ENCODE measurements at regions of chr19 and their contacts with region 1.

Region 1: GRCh38 chr19:38335949-38336637 is 463 bp downstream of the CATSPERG start:
- DNase-seq: peak; percentile 96
- ATAC-seq: peak; percentile 64
- H3K4me3 ChIP-seq: peak overlapping the region; percentile 52 to 85 (median 80)
- H3K4me3 Mint-ChIP-seq: peak overlapping the region; percentile 97
- H3K27ac ChIP-seq: peak overlapping the region; percentile 89 to 95
- H3K27ac Mint-ChIP-seq: peak overlapping the region; percentile 97
- H3K4me1 ChIP-seq: peaks cover 5 to 11% of the 10 kb centered on the region in 2 donors
- H3K4me1 Mint-ChIP-seq: peaks cover 13% of the 10 kb centered on the region
- H3K27me3 ChIP-seq: no peaks in the 10 kb centered on the region
- H3K27me3 Mint-ChIP-seq: no peaks in the 10 kb centered on the region
- CTCF ChIP-seq: no peak

Region 2: GRCh38 chr19:37077934-37078725 is 1258.0 kb before region 1 on chr19 and contains the start of gene ZNF420:
- CTCF ChIA-PET with region 1: no interaction called
- POLR2A ChIA-PET with region 1: interaction called, 3 read pairs
- intact Hi-C with region 1: loop called (anchors 5 kb)
- DNase-seq: peak; percentile 96
- ATAC-seq: peak; percentile 95
- H3K4me3 ChIP-seq: peak within 1 kb of the TSS; percentile 76 to 93 (median 85)
- H3K4me3 Mint-ChIP-seq: peak within 1 kb of the TSS; percentile 93
- H3K27ac ChIP-seq: peak within 1 kb of the TSS; percentile 71 to 89
- H3K27ac Mint-ChIP-seq: peak within 1 kb of the TSS; percentile 96
- H3K4me1 ChIP-seq: peaks cover 14 to 20% of the 10 kb centered on the region in 2 donors
- H3K4me1 Mint-ChIP-seq: peaks cover 29% of the 10 kb centered on the region
- H3K27me3 ChIP-seq: no peaks in the 10 kb centered on the region
- H3K27me3 Mint-ChIP-seq: no peaks in the 10 kb centered on the region
- CTCF ChIP-seq: no peak
- total RNA-seq, gene ZNF420: 17.4 and 24.9 TPM in 2 replicates

Region 3: DNA sequence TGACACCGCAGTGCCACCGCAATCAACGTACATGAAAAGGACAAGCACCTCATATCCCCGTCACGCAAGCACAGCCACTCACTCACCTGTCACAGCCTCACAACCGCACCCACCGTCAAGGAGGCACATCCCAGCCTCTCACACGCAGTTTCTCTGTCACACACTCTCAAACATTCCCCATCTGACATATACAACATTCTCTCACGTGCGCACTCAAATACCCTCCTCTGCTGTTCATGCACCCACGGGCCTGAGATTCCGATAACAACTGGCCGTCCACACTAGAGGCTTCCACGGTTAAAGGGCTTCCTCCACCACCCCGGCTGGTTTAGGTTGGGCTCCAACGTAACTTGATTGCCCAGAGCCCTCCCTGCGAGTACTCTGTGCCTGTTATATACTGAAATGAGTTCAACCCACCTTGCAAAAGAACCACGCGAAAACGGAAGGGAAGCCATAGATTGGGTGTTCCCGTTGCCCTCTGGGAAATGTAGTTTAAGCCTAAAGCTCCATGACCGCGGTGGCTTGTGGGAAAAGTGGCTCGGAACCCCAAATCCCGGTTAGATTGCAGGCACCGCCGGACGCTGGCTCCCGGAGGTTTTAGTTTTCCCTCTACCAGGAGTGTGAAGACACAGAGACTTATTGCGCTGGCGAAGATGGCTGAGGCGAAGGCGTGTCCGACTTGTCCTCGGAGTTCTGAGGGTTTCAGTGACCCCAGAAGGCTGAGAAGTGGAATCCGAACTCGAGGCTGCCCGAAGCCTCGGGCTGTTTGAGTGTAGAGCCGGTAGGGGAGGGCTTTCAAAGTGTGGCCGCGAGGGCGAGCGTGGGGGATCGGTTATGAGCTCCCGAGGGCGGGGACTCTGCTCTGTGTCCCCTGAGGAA is 556.7 kb before region 1 on chr19 and contains the start of gene ZNF573:
- CTCF ChIA-PET with region 1: no interaction called
- POLR2A ChIA-PET with region 1: no interaction called
- intact Hi-C with region 1: loop called (anchors 5 kb)
- DNase-seq: peak; percentile 91
- ATAC-seq: peak; percentile 84
- H3K4me3 ChIP-seq: peak within 1 kb of the TSS; percentile 71 to 81 (median 74)
- H3K4me3 Mint-ChIP-seq: peak within 1 kb of the TSS; percentile 96
- H3K27ac ChIP-seq: peak within 1 kb of the TSS; percentile 86 to 93
- H3K27ac Mint-ChIP-seq: peak within 1 kb of the TSS; percentile 97
- H3K4me1 ChIP-seq: peaks cover 7 to 11% of the 10 kb centered on the region in 2 donors
- H3K4me1 Mint-ChIP-seq: peaks cover 39% of the 10 kb centered on the region
- H3K27me3 ChIP-seq: no peaks in the 10 kb centered on the region
- H3K27me3 Mint-ChIP-seq: no peaks in the 10 kb centered on the region
- CTCF ChIP-seq: peak; percentile 18
- total RNA-seq, gene ZNF573: 28.8 and 31.1 TPM in 2 replicates

Region 4: DNA sequence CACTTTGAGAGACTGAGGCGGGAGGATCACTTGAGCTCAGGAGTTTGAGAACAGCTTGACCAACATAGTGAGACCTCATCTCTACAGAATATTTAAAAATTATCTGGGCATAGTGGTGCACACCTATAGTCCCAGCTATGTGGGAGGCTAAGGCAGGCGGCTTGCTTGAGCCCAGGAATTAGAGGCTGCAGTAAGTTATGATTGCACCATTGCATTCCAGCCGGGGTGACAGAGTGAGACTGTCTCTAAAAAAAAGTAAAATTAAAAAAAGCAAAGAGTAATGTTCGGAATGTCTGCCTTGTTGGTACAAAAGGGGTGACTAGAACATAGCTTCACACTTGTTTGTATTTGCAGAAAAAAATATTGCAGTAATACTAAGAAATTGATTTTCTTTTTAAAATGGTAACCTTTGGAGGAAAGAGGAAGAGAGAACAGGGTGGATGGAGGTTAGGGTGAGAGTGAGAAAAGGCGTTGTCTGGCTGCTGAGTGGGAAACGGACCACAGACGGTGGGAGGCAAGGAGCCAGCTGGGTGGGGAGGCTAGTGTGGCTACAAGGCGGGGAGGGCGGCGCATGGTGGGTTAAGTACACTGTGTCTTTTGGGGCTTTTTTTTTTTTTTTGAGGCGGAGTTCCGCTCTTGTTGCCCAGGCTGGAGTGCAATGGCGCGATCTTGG is 90.1 kb before region 1 on chr19:
- CTCF ChIA-PET with region 1: interaction called, 55 read pairs
- POLR2A ChIA-PET with region 1: no interaction called
- intact Hi-C with region 1: loop called (anchors 1 kb)
- DNase-seq: no peak
- ATAC-seq: no peak
- H3K4me3 ChIP-seq: no peak overlapping the region
- H3K4me3 Mint-ChIP-seq: no peak overlapping the region
- H3K27ac ChIP-seq: no peak overlapping the region
- H3K27ac Mint-ChIP-seq: no peak overlapping the region
- H3K4me1 ChIP-seq: peaks cover 3 to 12% of the 10 kb centered on the region in 2 donors
- H3K4me1 Mint-ChIP-seq: peaks cover 15% of the 10 kb centered on the region
- H3K27me3 ChIP-seq: no peaks in the 10 kb centered on the region
- H3K27me3 Mint-ChIP-seq: no peaks in the 10 kb centered on the region
- CTCF ChIP-seq: no peak

Region 5: GRCh38 chr19:38361633-38362075 is 25.6 kb after region 1 on chr19:
- CTCF ChIA-PET with region 1: no interaction called
- POLR2A ChIA-PET with region 1: no interaction called
- intact Hi-C with region 1: loop called (anchors 1 kb)
- DNase-seq: peak; percentile 77
- ATAC-seq: peak; percentile 68
- H3K4me3 ChIP-seq: peak overlapping the region; percentile 14 to 76 (median 62)
- H3K4me3 Mint-ChIP-seq: peak overlapping the region; percentile 91
- H3K27ac ChIP-seq: no peak overlapping the region
- H3K27ac Mint-ChIP-seq: peak overlapping the region; percentile 53
- H3K4me1 ChIP-seq: peaks cover 9 to 20% of the 10 kb centered on the region in 2 donors
- H3K4me1 Mint-ChIP-seq: peaks cover 17% of the 10 kb centered on the region
- H3K27me3 ChIP-seq: peaks cover 0 to 27% (median 2%) of the 10 kb centered on the region in 4 experiments
- H3K27me3 Mint-ChIP-seq: peaks cover 6% of the 10 kb centered on the region
- CTCF ChIP-seq: peak; percentile 16

Region 6: GRCh38 chr19:38402967-38403861 is 67.1 kb after region 1 on chr19 and contains the start of gene FAM98C:
- CTCF ChIA-PET with region 1: interaction called, 4 read pairs
- POLR2A ChIA-PET with region 1: no interaction called
- intact Hi-C with region 1: loop called (anchors 1 kb)
- DNase-seq: peak; percentile 99
- ATAC-seq: peak; percentile 97
- H3K4me3 ChIP-seq: peak within 1 kb of the TSS; percentile 41 to 85 (median 75)
- H3K4me3 Mint-ChIP-seq: peak within 1 kb of the TSS; percentile 94
- H3K27ac ChIP-seq: peak within 1 kb of the TSS; percentile 61 to 79
- H3K27ac Mint-ChIP-seq: peak within 1 kb of the TSS; percentile 94
- H3K4me1 ChIP-seq: peaks cover 5 to 14% of the 10 kb centered on the region in 2 donors
- H3K4me1 Mint-ChIP-seq: peaks cover 18% of the 10 kb centered on the region
- H3K27me3 ChIP-seq: peaks cover 0 to 20% (median 7%) of the 10 kb centered on the region in 4 experiments
- H3K27me3 Mint-ChIP-seq: peaks cover 18% of the 10 kb centered on the region
- CTCF ChIP-seq: peak; percentile 99
- total RNA-seq, gene FAM98C: 44.1 and 45.3 TPM in 2 replicates

Measured in B cell (primary cell).